Sigmoid colon (tissue), 7 donors: ENCODE measurements at regions of chr1 and their contacts with region 1.

Region 1: DNA sequence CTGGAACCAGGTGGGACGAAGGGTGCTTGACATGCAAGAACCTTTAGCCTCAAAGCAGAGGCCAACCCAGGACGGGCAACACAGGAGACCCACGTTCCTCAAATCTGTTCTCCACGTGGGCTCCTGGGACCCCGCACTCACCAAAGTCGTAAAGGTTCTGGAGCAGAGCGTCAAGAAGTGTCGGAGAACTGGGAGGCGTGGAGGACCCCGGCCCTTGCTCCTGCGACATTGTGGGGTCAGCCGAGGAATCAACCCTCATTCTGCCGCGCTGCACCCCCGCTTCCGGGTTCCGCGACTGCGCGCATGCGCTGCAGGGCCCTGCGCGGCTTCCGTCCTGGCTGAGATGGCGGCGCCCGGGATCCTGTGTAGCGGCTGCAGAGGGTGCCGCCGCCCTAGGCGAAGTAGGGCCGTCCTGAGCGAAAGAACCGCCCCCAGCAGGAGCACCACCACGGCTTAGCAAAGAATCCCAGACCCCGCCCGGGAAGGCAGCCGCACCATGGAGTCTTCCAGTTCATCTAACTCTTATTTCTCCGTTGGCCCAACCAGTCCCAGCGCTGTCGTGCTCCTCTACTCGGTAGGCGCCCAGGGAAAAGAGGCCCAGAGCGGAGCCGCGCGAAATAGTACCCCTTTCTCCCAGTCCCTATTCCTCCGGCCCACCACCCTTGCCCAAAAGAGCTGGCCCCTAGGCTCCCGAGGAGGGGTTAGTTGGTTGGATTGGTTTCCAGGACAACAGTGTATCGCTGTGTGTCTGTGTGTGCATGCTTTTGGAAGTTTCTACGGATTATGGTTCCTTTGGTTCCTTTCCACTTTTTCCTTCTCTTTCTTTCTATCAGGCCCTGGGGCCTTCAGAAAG is at the start of gene GNPAT:
- DNase-seq: peak; percentile 92
- H3K4me3 ChIP-seq: peak within 1 kb of the TSS; percentile 72 to 85 (median 80)
- H3K27ac ChIP-seq: peak within 1 kb of the TSS; percentile 79 to 90 (median 84)
- H3K4me1 ChIP-seq: peaks cover 0 to 48% (median 32%) of the 10 kb centered on the region in 4 donors
- H3K27me3 ChIP-seq: no peaks in the 10 kb centered on the region
- CTCF ChIP-seq: no peak
- EP300 ChIP-seq: no peak
- POLR2A ChIP-seq: peak; percentile 74 to 86
- total RNA-seq, gene GNPAT: 45.9 to 58.9 (median 50.5) TPM

Region 2: GRCh38 chr1:230978491-230979388 is 262.4 kb before region 1 on chr1 and contains the starts of genes ARV1 and TTC13:
- intact Hi-C with region 1: loop called (anchors 10 kb)
- DNase-seq: peak; percentile 98
- H3K4me3 ChIP-seq: peak within 1 kb of the TSS; percentile 65 to 95 (median 90)
- H3K27ac ChIP-seq: peak within 1 kb of the TSS; percentile 71 to 83 (median 80)
- H3K4me1 ChIP-seq: peaks cover 0 to 27% (median 17%) of the 10 kb centered on the region in 4 donors
- H3K27me3 ChIP-seq: no peaks in the 10 kb centered on the region
- CTCF ChIP-seq: no peak
- EP300 ChIP-seq: no peak
- POLR2A ChIP-seq: peak; percentile 25 to 76
- total RNA-seq, gene ARV1: 19.7 to 32.1 (median 22.8) TPM
- total RNA-seq, gene TTC13: 7.3 to 19.7 (median 16.3) TPM

Region 3: DNA sequence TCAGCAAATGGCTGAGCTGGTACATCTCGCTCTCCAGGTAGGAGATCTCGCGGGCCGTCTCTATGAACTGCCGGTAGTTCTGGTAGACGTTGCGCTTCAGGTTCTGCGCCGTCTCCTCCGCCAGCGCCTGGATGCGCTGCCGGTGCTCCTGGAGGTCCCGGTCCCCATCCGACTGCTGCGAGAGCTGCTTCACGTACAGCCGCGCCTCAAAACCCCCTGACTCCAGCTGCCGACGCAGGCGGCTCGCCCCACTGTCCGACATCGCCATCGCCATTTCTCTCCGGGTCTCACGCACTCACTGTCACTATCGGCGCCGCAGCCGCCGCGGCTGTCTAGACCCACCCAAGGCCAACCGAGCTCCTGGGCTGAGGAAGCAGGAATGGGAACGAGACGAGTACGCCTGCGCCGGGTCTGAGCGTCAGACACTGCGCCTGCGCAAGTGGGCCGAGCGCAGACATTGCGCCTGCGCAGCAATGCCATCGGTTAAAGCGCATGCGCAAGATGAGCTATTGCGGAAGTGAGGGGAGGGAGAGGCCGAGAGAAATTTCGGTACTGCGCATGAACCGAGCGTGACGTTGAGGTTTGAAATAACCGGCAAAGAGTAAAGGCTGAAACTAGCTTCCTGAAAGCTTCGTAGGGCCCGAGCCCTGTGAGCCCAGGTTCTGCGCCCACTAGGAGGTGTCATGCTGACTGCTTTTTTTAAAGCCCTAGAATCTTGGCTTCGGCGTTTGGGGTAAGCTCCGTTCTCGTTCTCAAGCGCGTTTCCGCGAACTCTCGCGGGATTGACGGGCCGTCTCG is 96.6 kb after region 1 on chr1 and contains the start of gene EXOC8:
- intact Hi-C with region 1: loop called (anchors 5 kb)
- DNase-seq: peak; percentile 97
- H3K4me3 ChIP-seq: peak within 1 kb of the TSS; percentile 69 to 94 (median 81)
- H3K27ac ChIP-seq: peak within 1 kb of the TSS; percentile 88 to 96 (median 92)
- H3K4me1 ChIP-seq: peaks cover 0 to 60% (median 52%) of the 10 kb centered on the region in 4 donors
- H3K27me3 ChIP-seq: no peaks in the 10 kb centered on the region
- CTCF ChIP-seq: no peak
- EP300 ChIP-seq: no peak
- POLR2A ChIP-seq: peak; percentile 86 to 87
- total RNA-seq, gene EXOC8: 9.5 to 11.7 (median 11.3) TPM

Region 4: DNA sequence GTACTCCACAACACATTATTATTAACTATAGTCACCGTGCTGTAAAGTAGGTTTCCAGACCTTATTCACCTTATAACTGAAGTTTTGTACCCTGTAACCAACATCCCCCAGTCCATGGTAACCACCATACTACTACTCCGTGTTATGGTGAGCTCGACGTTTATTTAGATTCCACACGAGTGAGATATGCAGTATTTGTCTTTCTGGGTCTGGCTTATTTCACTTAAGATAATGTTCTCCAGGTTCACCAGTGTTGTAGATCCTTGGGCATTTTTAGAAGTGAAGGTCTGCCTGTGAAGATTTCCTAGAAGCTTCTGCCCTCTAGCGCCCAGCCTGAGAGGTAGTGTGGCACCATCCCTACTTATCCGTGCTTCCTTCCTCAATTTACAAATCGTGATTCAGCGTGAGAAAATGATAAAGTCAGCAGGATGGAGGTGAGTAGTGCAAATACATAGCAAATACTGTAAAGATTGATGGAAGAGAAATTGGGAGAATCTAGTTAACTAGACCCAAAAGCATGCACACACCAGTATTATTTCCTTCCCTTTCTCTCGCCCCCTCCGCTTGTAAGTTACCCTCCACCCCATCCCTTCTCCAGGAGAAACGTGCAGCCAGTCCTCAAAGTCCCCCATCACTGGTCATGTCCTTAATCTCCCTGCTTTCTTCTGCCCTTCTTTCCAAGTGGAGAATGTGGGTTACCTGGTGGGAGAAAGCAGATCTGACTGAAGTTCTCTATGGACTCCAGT is 349.5 kb after region 1 on chr1:
- intact Hi-C with region 1: loop called (anchors 5 kb)
- DNase-seq: peak; percentile 73
- H3K4me3 ChIP-seq: no peak overlapping the region
- H3K27ac ChIP-seq: peak overlapping the region in 3 of 4 donors; percentile 41 to 69 (median 61)
- H3K4me1 ChIP-seq: peaks cover 0 to 23% (median 14%) of the 10 kb centered on the region in 4 donors
- H3K27me3 ChIP-seq: no peaks in the 10 kb centered on the region
- CTCF ChIP-seq: peak; percentile 56 to 73 (median 61)
- EP300 ChIP-seq: peak in 2 of 4 donors; percentile 9 to 62
- POLR2A ChIP-seq: no peak